WTC11 (cell line): ENCODE measurements at regions of chr3 and their contacts with region 1.

Region 1: GRCh38 chr3:187738331-187739093 is 6.8 kb downstream of the BCL6 start:
- DNase-seq: peak; percentile 86
- ATAC-seq: peak; percentile 59
- H3K4me3 Mint-ChIP-seq: peak overlapping the region; percentile 82
- H3K27ac Mint-ChIP-seq: peak overlapping the region; percentile 93
- H3K4me1 Mint-ChIP-seq: peaks cover 48% of the 10 kb centered on the region
- H3K27me3 Mint-ChIP-seq: peaks cover 32% of the 10 kb centered on the region
- CTCF ChIP-seq: 0 out of 2 replicates have a peak, but pooled peaks have one; percentile 16

Region 2: GRCh38 chr3:187719628-187720336 is 18.7 kb before region 1 on chr3:
- CTCF ChIA-PET with region 1: interaction called, 14 read pairs
- POLR2A ChIA-PET with region 1: no interaction called
- DNase-seq: no peak
- ATAC-seq: no peak
- H3K4me3 Mint-ChIP-seq: no peak overlapping the region
- H3K27ac Mint-ChIP-seq: peak overlapping the region; percentile 1; the same call in 1 of the 2 replicates
- H3K4me1 Mint-ChIP-seq: peaks cover 27% of the 10 kb centered on the region
- H3K27me3 Mint-ChIP-seq: peaks cover 9% of the 10 kb centered on the region; the same call in 1 of the 2 replicates
- CTCF ChIP-seq: no peak

Region 3: GRCh38 chr3:188052169-188053030 is 313.9 kb after region 1 on chr3:
- CTCF ChIA-PET with region 1: interaction called, 39 read pairs
- POLR2A ChIA-PET with region 1: interaction called, 4 read pairs
- DNase-seq: peak; percentile 63
- ATAC-seq: peak; percentile 85
- H3K4me3 Mint-ChIP-seq: no peak overlapping the region
- H3K27ac Mint-ChIP-seq: peak overlapping the region; percentile 72
- H3K4me1 Mint-ChIP-seq: peaks cover 20% of the 10 kb centered on the region
- H3K27me3 Mint-ChIP-seq: peaks cover 12% of the 10 kb centered on the region
- CTCF ChIP-seq: no peak

Region 4: DNA sequence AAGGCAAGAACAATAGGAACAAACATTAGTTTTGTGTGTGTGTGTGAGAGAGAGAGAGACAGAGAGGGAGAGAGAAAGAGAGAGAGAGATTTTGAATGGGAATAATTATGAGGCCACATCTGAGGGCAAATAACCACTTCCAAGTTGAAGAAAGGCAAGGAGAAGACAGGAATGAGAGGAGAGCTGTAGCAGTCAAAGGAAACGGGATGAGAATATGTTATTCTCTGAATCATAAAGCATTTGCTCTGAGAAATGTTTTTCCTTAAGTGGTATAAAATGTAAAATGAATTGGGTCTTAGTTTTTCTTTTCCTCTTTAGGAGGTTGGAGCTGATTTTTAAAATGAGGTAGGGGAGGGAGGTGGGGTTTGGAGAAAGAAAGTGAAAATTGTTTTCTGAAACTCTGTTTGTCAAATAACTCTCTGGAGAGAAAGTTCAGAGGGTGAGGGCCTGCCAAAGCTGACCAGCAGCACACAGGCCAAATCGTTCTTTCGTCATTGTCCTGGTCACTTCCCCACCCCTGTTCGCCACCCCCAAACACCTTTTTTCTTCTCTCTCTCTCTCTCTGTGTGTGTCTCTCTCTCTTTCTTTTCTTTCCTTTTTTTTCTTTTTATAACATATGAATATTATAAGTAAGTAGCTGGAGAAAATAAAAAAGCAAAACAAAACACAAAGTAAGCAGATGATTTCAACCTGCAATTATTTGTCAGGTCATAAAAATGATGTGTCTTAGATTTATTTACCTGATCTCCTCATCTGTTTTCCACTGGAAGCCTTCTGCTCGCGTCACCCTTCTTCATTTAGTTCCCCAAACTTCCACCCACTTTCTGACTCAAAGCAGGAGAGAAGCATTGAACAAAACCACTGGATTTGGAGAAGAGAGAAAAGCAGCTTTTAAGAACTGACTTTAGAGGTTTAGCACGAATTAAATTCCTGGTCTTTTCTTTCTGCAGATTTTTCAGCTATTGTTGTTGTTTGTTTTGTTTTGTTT is 526.0 kb after region 1 on chr3:
- CTCF ChIA-PET with region 1: interaction called, 13 read pairs
- POLR2A ChIA-PET with region 1: no interaction called
- DNase-seq: no peak
- ATAC-seq: no peak
- H3K4me3 Mint-ChIP-seq: no peak overlapping the region
- H3K27ac Mint-ChIP-seq: no peak overlapping the region
- H3K4me1 Mint-ChIP-seq: peaks cover 1% of the 10 kb centered on the region
- H3K27me3 Mint-ChIP-seq: no peaks in the 10 kb centered on the region
- CTCF ChIP-seq: no peak

Region 5: DNA sequence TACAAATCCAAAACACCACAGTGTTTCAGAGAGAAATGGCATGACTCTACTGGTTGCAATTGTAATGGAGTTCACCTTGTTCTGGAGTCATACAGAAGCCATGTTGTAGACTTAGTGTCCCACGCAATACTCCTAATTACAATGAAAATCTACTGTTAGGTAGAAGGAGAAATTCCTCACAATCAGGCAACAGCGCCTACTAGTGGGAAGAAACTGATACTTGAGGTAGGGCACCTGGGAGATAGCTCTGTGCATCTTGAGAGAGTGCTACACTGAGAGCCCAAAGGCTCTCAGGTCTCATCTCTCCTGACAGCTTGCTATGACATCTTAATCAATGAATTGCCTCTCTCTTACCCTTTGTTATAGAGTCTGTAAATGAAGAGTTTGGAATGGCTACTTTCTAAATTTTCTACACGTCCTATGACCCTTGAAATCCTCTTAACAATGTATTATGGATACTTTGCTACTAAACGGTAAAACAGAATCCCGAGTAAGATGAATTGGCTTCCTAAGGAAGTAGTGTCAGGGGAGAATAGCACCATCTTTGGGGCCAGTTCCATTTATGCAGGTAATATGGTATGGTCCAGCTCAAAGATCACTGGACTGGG is 1010.6 kb after region 1 on chr3:
- CTCF ChIA-PET with region 1: interaction called, 48 read pairs
- POLR2A ChIA-PET with region 1: interaction called, 4 read pairs
- DNase-seq: peak; percentile 60
- ATAC-seq: peak; percentile 95
- H3K4me3 Mint-ChIP-seq: no peak overlapping the region
- H3K27ac Mint-ChIP-seq: no peak overlapping the region
- H3K4me1 Mint-ChIP-seq: no peaks in the 10 kb centered on the region
- H3K27me3 Mint-ChIP-seq: no peaks in the 10 kb centered on the region
- CTCF ChIP-seq: peak; percentile 76

Region 6: GRCh38 chr3:188947401-188948280 is 1209.1 kb after region 1 on chr3:
- CTCF ChIA-PET with region 1: interaction called, 132 read pairs
- POLR2A ChIA-PET with region 1: interaction called, 13 read pairs
- DNase-seq: peak; percentile 87
- ATAC-seq: peak; percentile 88
- H3K4me3 Mint-ChIP-seq: peak overlapping the region; percentile 75
- H3K27ac Mint-ChIP-seq: peak overlapping the region; percentile 93
- H3K4me1 Mint-ChIP-seq: peaks cover 18% of the 10 kb centered on the region
- H3K27me3 Mint-ChIP-seq: peaks cover 4% of the 10 kb centered on the region; the same call in 1 of the 2 replicates
- CTCF ChIP-seq: peak; percentile 18; the same call in 1 of the 2 replicates